ENCODE measurements at regions of chr1 and their contacts with region 1.

Region 1: GRCh38 chr1:35807614-35808449 is at the start of gene AGO4:
- DNase-seq: peak; percentile 74
- ATAC-seq: peak; percentile 92
- total RNA-seq, gene AGO4: 24.9 TPM

Region 2: GRCh38 chr1:35222322-35223083 is 585.3 kb before region 1 on chr1:
- intact Hi-C with region 1: no loop called
- DNase-seq: no peak
- ATAC-seq: peak; percentile 68

Region 3: GRCh38 chr1:35282172-35282571 is 525.7 kb before region 1 on chr1:
- intact Hi-C with region 1: loop called (anchors 2 kb)
- DNase-seq: no peak
- ATAC-seq: no peak

Region 4: GRCh38 chr1:35753626-35754260 is 54.1 kb before region 1 on chr1:
- intact Hi-C with region 1: no loop called
- DNase-seq: no peak
- ATAC-seq: no peak

Region 5: DNA sequence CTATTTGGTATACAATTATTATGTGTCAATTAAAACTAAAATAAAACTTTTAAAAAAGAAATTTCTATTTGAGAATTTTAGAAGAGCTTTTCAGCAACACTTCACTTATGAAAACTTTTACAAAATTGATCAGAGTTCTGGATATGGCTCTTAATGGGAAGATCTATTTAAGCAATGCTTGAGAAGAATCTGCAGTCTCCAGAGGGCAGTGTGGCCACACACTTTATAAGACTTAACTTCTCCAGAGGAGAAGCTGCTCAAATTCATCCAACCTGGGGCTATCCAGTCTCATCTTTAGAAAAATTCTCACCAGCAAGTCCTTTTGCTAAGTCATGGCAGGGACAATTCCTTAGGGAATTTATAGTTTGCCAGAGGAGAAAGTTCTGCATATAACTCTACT is 50.0 kb after region 1 on chr1:
- intact Hi-C with region 1: no loop called
- DNase-seq: no peak
- ATAC-seq: no peak

Measured in sciatic nerve (tissue), 2 donors.